ENCODE measurements at regions of chrX and their contacts with region 1.

Region 1: GRCh38 chrX:37722595-37722994 is 37.0 kb downstream of the XK start:
- DNase-seq: no peak
- H3K4me3 ChIP-seq: no peak overlapping the region
- H3K27ac ChIP-seq: peak overlapping the region in 22 of 59 donors; percentile 6 to 68 (median 28)
- H3K27me3 ChIP-seq: peaks cover 0 to 30% (median 6%) of the 10 kb centered on the region in 45 donors
- CTCF ChIP-seq: no peak

Region 2: GRCh38 chrX:37685452-37686353 is 36.9 kb before region 1 on chrX and contains the start of gene XK:
- intact Hi-C with region 1: loop called in 1 of 2 experiments (anchors 5 kb)
- DNase-seq: peak; percentile 28 to 67 (median 56)
- H3K4me3 ChIP-seq: peak within 1 kb of the TSS; percentile 18 to 69 (median 56)
- H3K27ac ChIP-seq: peak within 1 kb of the TSS in 46 of 59 donors; percentile 6 to 85 (median 63)
- H3K27me3 ChIP-seq: peaks cover 0 to 45% (median 10%) of the 10 kb centered on the region in 45 donors
- CTCF ChIP-seq: no peak
- total RNA-seq, gene XK: 3.5 to 17.9 (median 11.6) TPM

Region 3: DNA sequence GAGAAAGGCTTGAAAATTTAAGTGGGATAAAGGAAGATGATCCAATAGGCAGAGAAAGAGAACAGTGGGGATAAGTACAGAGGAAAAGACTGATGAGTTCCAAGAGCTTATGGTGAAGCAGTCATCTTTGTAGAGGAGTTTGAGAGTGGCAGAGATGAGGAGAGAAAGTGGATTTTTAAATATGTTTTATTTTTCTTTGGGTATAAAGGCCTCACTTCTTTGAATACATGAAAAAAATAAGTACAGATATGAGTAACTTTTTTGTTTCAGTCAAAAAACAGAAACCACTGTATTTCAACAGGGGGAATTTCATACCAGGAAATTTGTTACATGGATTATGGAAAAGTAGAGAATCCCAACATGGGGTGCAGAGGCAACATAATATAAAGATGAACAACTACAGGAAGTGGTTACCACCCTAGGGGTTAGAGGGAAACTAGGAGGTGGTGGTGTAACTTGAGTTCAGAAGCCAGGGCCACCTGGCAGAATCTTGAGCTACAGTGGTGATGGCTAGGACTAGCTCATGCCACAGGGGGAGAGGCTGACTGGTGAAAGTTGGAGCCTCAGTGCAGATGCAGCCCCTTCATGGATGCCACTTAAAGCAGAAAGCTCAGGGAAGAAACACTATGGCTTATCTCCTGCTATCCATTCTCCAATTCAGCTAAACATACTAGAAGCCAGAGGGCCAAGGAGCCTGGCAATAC is 53.8 kb after region 1 on chrX:
- intact Hi-C with region 1: no loop called
- DNase-seq: no peak
- H3K4me3 ChIP-seq: no peak overlapping the region
- H3K27ac ChIP-seq: no peak overlapping the region
- H3K27me3 ChIP-seq: peaks cover 0 to 34% (median 0%) of the 10 kb centered on the region in 45 donors
- CTCF ChIP-seq: no peak